PC-3 (cell line): ENCODE measurements at regions of chr5 and their contacts with region 1.

Region 1: GRCh38 chr5:53481887-53482716 is 1.7 kb downstream of the FST start:
- DNase-seq: no peak
- ATAC-seq: no peak
- H3K4me3 ChIP-seq: peak overlapping the region; percentile 97
- H3K27ac ChIP-seq: peak overlapping the region; percentile 96
- H3K4me1 ChIP-seq: peaks cover 29% of the 10 kb centered on the region
- H3K27me3 ChIP-seq: no peaks in the 10 kb centered on the region
- CTCF ChIP-seq: no peak

Region 2: GRCh38 chr5:53262348-53262970 is 219.6 kb before region 1 on chr5:
- CTCF ChIA-PET with region 1: no interaction called
- POLR2A ChIA-PET with region 1: interaction called, 8 read pairs
- intact Hi-C with region 1: loop called (anchors 2 kb)
- DNase-seq: peak; percentile 69
- ATAC-seq: peak; percentile 78
- H3K4me3 ChIP-seq: no peak overlapping the region
- H3K27ac ChIP-seq: peak overlapping the region; percentile 83
- H3K4me1 ChIP-seq: peaks cover 22% of the 10 kb centered on the region
- H3K27me3 ChIP-seq: no peaks in the 10 kb centered on the region
- CTCF ChIP-seq: peak; percentile 73

Region 3: GRCh38 chr5:53362521-53362941 is 119.6 kb before region 1 on chr5:
- CTCF ChIA-PET with region 1: no interaction called
- POLR2A ChIA-PET with region 1: interaction called, 5 read pairs
- intact Hi-C with region 1: loop called (anchors 2 kb)
- DNase-seq: peak; percentile 97
- ATAC-seq: peak; percentile 57
- H3K4me3 ChIP-seq: no peak overlapping the region
- H3K27ac ChIP-seq: peak overlapping the region; percentile 100
- H3K4me1 ChIP-seq: peaks cover 85% of the 10 kb centered on the region
- H3K27me3 ChIP-seq: no peaks in the 10 kb centered on the region
- CTCF ChIP-seq: no peak

Region 4: GRCh38 chr5:53397845-53398244 is 84.3 kb before region 1 on chr5:
- CTCF ChIA-PET with region 1: no interaction called
- POLR2A ChIA-PET with region 1: no interaction called
- intact Hi-C with region 1: no loop called
- DNase-seq: peak; percentile 88
- ATAC-seq: peak; percentile 90
- H3K4me3 ChIP-seq: no peak overlapping the region
- H3K27ac ChIP-seq: peak overlapping the region; percentile 84
- H3K4me1 ChIP-seq: peaks cover 15% of the 10 kb centered on the region
- H3K27me3 ChIP-seq: no peaks in the 10 kb centered on the region
- CTCF ChIP-seq: no peak

Region 5: DNA sequence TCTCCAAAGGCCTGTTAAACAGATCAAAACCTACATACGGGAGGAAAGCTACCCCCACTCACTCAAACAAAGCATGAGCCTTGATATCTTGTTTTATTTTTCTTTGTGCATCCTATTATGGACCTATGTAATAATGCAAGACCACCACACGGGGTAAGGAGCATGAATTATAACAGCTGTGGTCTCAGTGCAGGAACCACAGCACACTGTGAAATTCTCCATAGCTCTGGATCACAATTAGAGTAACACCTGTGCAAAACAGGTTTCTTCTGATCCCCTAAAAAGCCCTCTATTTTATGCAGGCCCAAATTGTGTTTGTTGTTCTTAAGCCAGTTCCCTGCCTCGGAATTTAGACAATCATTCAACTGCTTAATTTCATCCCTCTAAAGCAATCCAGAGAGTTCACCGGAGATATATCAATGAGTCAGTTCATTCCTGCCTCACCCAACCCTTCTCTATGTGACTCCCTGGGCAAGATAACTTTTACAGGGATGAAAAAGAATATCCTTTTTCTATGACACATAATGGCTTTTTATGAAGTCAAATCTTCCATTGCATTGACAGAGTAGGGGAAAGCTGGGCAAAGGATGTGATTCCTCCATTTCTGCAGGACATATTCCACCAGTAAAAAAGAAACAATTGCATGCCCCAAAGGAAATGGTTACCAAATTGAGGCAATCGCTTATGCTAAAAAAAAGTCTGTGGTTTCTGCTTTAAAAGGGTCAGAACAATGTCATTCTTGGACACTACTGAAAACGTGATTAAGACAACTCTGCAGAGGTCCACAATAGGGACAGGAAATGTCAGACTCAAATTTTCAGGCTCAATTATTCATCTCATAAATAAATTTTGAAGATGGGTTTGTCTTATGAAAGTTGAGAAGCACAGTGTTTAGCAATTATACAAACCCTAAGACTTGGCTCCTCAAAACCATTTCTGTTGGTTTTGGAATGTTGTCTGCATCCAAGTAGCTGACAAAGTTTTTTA is 43.3 kb before region 1 on chr5:
- CTCF ChIA-PET with region 1: no interaction called
- POLR2A ChIA-PET with region 1: no interaction called
- intact Hi-C with region 1: loop called (anchors 2 kb)
- DNase-seq: peak; percentile 79
- ATAC-seq: peak; percentile 96
- H3K4me3 ChIP-seq: no peak overlapping the region
- H3K27ac ChIP-seq: peak overlapping the region; percentile 87
- H3K4me1 ChIP-seq: peaks cover 29% of the 10 kb centered on the region
- H3K27me3 ChIP-seq: no peaks in the 10 kb centered on the region
- CTCF ChIP-seq: no peak

Region 6: GRCh38 chr5:53603009-53603687 is 121.0 kb after region 1 on chr5:
- CTCF ChIA-PET with region 1: no interaction called
- POLR2A ChIA-PET with region 1: no interaction called
- intact Hi-C with region 1: loop called (anchors 5 kb)
- DNase-seq: no peak
- ATAC-seq: no peak
- H3K4me3 ChIP-seq: no peak overlapping the region
- H3K27ac ChIP-seq: peak overlapping the region; percentile 55
- H3K4me1 ChIP-seq: peaks cover 31% of the 10 kb centered on the region
- H3K27me3 ChIP-seq: no peaks in the 10 kb centered on the region
- CTCF ChIP-seq: no peak

Region 7: DNA sequence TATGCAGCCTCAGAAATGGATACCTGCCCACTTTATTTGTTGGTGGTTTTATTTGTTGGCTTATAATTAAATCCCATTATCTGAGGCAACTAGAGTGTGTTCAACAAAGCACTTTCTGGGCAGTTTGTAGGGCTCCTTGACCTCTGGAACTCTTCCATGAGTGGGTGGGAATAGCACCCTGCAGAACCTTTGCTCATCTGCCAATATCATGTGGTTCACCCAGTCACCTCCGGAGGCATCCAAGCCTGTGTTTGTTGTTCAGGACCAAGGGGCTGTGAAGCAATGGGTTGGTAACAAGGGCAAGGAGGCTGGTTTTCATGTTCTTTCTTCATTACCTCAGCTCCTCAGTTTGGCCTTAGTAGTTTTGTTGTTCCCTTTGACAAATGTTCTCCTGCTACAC is 392.3 kb after region 1 on chr5:
- CTCF ChIA-PET with region 1: no interaction called
- POLR2A ChIA-PET with region 1: no interaction called
- intact Hi-C with region 1: loop called (anchors 2 kb)
- DNase-seq: peak; percentile 21
- ATAC-seq: no peak
- H3K4me3 ChIP-seq: no peak overlapping the region
- H3K27ac ChIP-seq: no peak overlapping the region
- H3K4me1 ChIP-seq: no peaks in the 10 kb centered on the region
- H3K27me3 ChIP-seq: no peaks in the 10 kb centered on the region
- CTCF ChIP-seq: 0 out of 2 replicates have a peak, but pooled peaks have one; percentile 10